Aorta (tissue), 5 donors: ENCODE measurements at regions of chr16 and their contacts with region 1.

Region 1: GRCh38 chr16:10918294-10919002 is 23.8 kb downstream of the DEXI start:
- DNase-seq: peak; percentile 96 to 97
- ATAC-seq: peak; percentile 94
- H3K4me3 ChIP-seq: no peak overlapping the region
- H3K27ac ChIP-seq: no peak overlapping the region
- H3K4me1 ChIP-seq: no peaks in the 10 kb centered on the region
- H3K27me3 ChIP-seq: no peaks in the 10 kb centered on the region

Region 2: DNA sequence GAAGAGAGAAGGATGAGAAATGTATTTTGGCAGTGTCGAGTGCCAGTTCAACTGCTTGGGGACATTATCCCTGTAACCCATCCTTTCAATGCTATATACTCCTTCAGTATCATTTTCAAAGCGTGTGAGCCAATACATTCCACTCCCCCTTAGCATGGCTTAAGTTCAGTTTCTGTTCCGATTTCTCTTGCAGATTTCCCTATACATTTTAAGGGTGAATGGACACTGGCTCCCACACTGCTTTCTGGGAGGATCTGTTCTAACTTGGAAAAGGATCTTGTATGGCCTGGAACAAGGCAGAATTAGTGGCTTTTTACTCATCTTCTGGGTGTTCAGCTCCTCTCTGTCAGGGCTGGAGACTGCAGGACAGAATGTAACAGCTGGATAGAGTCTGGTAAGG is 1493.2 kb before region 1 on chr16:
- intact Hi-C with region 1: no loop called
- DNase-seq: no peak
- ATAC-seq: no peak
- H3K4me3 ChIP-seq: no peak overlapping the region
- H3K27ac ChIP-seq: no peak overlapping the region
- H3K4me1 ChIP-seq: no peaks in the 10 kb centered on the region
- H3K27me3 ChIP-seq: peaks cover 0 to 4% of the 10 kb centered on the region in 2 donors

Region 3: GRCh38 chr16:10743610-10744393 is 174.6 kb before region 1 on chr16 and contains the start of gene NUBP1:
- intact Hi-C with region 1: loop called (anchors 2 to 5 kb)
- DNase-seq: peak; percentile 99 to 100
- ATAC-seq: peak; percentile 98
- H3K4me3 ChIP-seq: peak within 1 kb of the TSS; percentile 29 to 35
- H3K27ac ChIP-seq: peak within 1 kb of the TSS; percentile 71 to 100
- H3K4me1 ChIP-seq: peaks cover 0 to 2% of the 10 kb centered on the region in 2 donors
- H3K27me3 ChIP-seq: no peaks in the 10 kb centered on the region
- total RNA-seq, gene NUBP1: 31.3 TPM

Region 4: GRCh38 chr16:10754941-10755340 is 163.5 kb before region 1 on chr16:
- intact Hi-C with region 1: loop called (anchors 5 kb)
- DNase-seq: peak in 1 of 2 donors; percentile 26
- ATAC-seq: no peak
- H3K4me3 ChIP-seq: no peak overlapping the region
- H3K27ac ChIP-seq: no peak overlapping the region
- H3K4me1 ChIP-seq: no peaks in the 10 kb centered on the region
- H3K27me3 ChIP-seq: no peaks in the 10 kb centered on the region